ENCODE measurements at regions of chr14 and their contacts with region 1.

Region 1: DNA sequence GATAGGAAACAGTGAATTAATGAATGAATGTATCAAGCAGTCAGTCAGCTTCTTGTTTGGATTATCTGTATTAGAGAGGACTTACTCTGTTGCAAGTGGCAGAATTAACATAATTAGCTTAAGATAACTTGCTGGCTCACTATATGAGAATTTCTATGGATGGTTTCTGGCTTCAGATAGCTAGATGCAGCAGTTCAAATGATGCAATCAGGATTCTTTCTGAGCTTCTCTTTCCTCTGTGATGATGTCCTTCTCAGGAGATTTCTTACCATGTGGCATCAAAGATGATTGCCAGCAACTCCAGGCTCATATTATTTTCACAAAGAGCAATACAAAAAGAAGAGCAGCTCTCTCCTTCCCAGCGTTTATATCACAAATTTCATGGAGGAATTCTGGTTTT is 30.7 kb downstream of the FRMD6 start:
- DNase-seq: peak; percentile 57
- ATAC-seq: peak; percentile 54
- H3K4me3 ChIP-seq: no peak overlapping the region
- H3K27ac ChIP-seq: peak overlapping the region; percentile 55; the same call in 1 of the 2 replicates
- H3K4me1 ChIP-seq: peaks cover 20% of the 10 kb centered on the region
- H3K27me3 ChIP-seq: no peaks in the 10 kb centered on the region
- CTCF ChIP-seq: no peak
- POLR2A ChIP-seq: no peak
- RAD21 ChIP-seq: no peak

Region 2: DNA sequence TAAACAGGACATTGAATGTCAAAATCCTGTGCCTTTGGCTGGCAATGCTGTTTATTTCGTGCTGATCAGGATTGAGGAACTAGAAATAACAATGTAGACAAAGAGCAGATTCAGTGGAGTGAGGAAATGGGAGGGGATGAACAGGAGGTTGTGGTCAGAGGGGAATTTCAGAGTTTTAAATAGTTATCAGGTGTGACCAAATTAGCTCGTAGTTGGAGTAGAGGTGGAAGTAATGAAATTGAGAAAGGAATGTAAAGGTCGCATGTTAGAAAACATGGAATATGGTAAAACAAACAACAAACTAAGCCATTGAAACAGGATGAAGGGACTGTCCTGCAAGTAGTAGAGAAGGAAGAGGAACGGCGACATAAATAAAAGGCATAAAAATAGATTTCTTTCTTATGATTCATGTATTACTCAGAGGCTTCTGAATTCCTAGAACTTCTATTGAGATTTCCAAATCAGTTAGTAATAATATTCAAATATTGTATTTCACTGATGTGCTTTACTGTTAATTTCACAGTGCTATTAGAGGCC is 1004.8 kb before region 1 on chr14:
- CTCF ChIA-PET with region 1: no interaction called
- POLR2A ChIA-PET with region 1: no interaction called
- dilution Hi-C with region 1: no loop called
- in situ Hi-C with region 1: no loop called
- intact Hi-C with region 1: no loop called
- DNase-seq: peak; percentile 67
- ATAC-seq: peak; percentile 78
- H3K4me3 ChIP-seq: peak overlapping the region; percentile 11; the same call in 1 of the 2 replicates
- H3K27ac ChIP-seq: peak overlapping the region; percentile 94; the same call in 1 of the 2 replicates
- H3K4me1 ChIP-seq: peaks cover 20% of the 10 kb centered on the region
- H3K27me3 ChIP-seq: no peaks in the 10 kb centered on the region
- CTCF ChIP-seq: no peak
- POLR2A ChIP-seq: no peak
- RAD21 ChIP-seq: no peak

Region 3: GRCh38 chr14:51410897-51411296 is 271.5 kb before region 1 on chr14:
- CTCF ChIA-PET with region 1: no interaction called
- POLR2A ChIA-PET with region 1: interaction called, 14 read pairs
- dilution Hi-C with region 1: no loop called
- in situ Hi-C with region 1: no loop called
- intact Hi-C with region 1: no loop called
- DNase-seq: no peak
- ATAC-seq: no peak
- H3K4me3 ChIP-seq: no peak overlapping the region
- H3K27ac ChIP-seq: no peak overlapping the region
- H3K4me1 ChIP-seq: peaks cover 2% of the 10 kb centered on the region; the same call in 1 of the 2 replicates
- H3K27me3 ChIP-seq: no peaks in the 10 kb centered on the region
- CTCF ChIP-seq: no peak
- POLR2A ChIP-seq: no peak
- RAD21 ChIP-seq: no peak

Region 4: GRCh38 chr14:52146504-52146903 is 464.1 kb after region 1 on chr14:
- CTCF ChIA-PET with region 1: no interaction called
- POLR2A ChIA-PET with region 1: no interaction called
- dilution Hi-C with region 1: no loop called
- in situ Hi-C with region 1: no loop called
- intact Hi-C with region 1: no loop called
- DNase-seq: no peak
- ATAC-seq: no peak
- H3K4me3 ChIP-seq: no peak overlapping the region
- H3K27ac ChIP-seq: no peak overlapping the region
- H3K4me1 ChIP-seq: no peaks in the 10 kb centered on the region
- H3K27me3 ChIP-seq: peaks cover 22% of the 10 kb centered on the region
- CTCF ChIP-seq: peak; percentile 29; the same call in 1 of the 2 replicates
- POLR2A ChIP-seq: no peak
- RAD21 ChIP-seq: no peak